Calu3 (cell line): ENCODE measurements at regions of chr22 and their contacts with region 1.

Region 1: GRCh38 chr22:22787786-22788459 is 99.7 kb upstream of the IGLL5 start:
- DNase-seq: peak; percentile 78
- H3K4me3 Mint-ChIP-seq: no peak overlapping the region
- H3K27ac Mint-ChIP-seq: no peak overlapping the region
- H3K4me1 Mint-ChIP-seq: no peaks in the 10 kb centered on the region
- H3K27me3 Mint-ChIP-seq: peaks cover 66% of the 10 kb centered on the region
- CTCF ChIP-seq: peak; percentile 83

Region 2: GRCh38 chr22:22770280-22770871 is 17.5 kb before region 1 on chr22:
- CTCF ChIA-PET with region 1: interaction called, 17 read pairs
- intact Hi-C with region 1: no loop called
- DNase-seq: peak; percentile 84
- H3K4me3 Mint-ChIP-seq: no peak overlapping the region
- H3K27ac Mint-ChIP-seq: no peak overlapping the region
- H3K4me1 Mint-ChIP-seq: no peaks in the 10 kb centered on the region
- H3K27me3 Mint-ChIP-seq: peaks cover 97% of the 10 kb centered on the region
- CTCF ChIP-seq: peak; percentile 84